ENCODE measurements at regions of chr16 and their contacts with region 1.

Region 1: GRCh38 chr16:71933913-71934695 is 38.8 kb downstream of the IST1 start:
- DNase-seq: no peak
- ATAC-seq: peak in 5 of 8 donors; percentile 9 to 36 (median 19)
- H3K4me3 ChIP-seq: no peak overlapping the region
- H3K27ac ChIP-seq: peak overlapping the region in 2 of 10 donors; percentile 23 to 24
- H3K4me1 ChIP-seq: peaks cover 0 to 47% (median 30%) of the 10 kb centered on the region in 9 donors
- H3K27me3 ChIP-seq: no peaks in the 10 kb centered on the region
- CTCF ChIP-seq: no peak

Region 2: DNA sequence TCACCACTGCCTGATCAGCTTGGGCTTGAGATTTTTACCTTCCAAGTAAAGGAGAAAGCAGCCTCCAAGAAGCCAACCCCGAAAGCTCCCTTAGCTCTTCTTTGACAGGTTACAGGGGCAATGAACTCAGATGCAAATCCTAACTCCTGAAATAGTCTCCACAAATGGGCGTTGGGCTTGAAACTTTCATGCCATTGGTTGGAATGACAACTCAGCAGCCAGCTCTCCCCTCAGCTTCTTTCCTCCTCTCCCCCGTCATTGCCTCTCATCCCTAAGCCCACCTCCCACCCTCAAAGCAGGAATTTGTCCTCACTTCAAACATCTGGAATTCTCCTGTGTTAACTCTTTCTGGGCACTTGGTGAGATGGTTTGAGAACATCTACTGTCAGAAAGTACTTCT is 357.1 kb before region 1 on chr16 and contains the start of gene TAT:
- intact Hi-C with region 1: no loop called
- DNase-seq: no peak
- ATAC-seq: no peak
- H3K4me3 ChIP-seq: no peak within 1 kb of the TSS
- H3K27ac ChIP-seq: no peak within 1 kb of the TSS
- H3K4me1 ChIP-seq: no peaks in the 10 kb centered on the region
- H3K27me3 ChIP-seq: peaks cover 0 to 28% (median 16%) of the 10 kb centered on the region in 7 donors
- CTCF ChIP-seq: no peak
- total RNA-seq, gene TAT: not detected

Region 3: GRCh38 chr16:71845639-71846430 is 88.3 kb before region 1 on chr16 and contains the start of gene ATXN1L:
- intact Hi-C with region 1: no loop called
- DNase-seq: peak; percentile 89 to 92
- ATAC-seq: peak; percentile 97 to 98 (median 98)
- H3K4me3 ChIP-seq: peak within 1 kb of the TSS; percentile 83 to 100 (median 99)
- H3K27ac ChIP-seq: peak within 1 kb of the TSS; percentile 64 to 97 (median 91)
- H3K4me1 ChIP-seq: peaks cover 0 to 33% (median 22%) of the 10 kb centered on the region in 9 donors
- H3K27me3 ChIP-seq: no peaks in the 10 kb centered on the region
- CTCF ChIP-seq: peak in 2 of 9 donors; percentile 6 to 26
- total RNA-seq, gene ATXN1L: 13.9 to 24.2 (median 19.1) TPM

Region 4: DNA sequence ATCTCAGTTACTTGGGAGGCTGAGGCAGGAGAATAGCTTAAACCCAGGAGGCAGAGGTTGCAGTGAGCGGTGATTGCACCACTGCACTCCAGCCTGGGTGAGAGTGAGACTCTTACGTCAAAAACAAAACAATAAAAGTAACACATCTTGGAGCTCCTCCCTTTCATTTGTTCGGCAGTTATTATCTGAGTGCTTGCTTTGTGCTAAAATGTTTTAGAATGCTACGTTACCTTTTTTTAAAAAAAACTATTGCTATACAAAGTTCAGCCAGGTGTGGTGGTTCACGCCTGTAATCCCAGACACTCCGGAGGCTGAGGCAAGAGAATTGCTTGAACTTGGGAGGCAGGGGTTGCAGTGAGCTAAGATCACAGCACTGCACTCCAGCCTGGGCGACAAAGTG is 23.0 kb before region 1 on chr16:
- intact Hi-C with region 1: loop called in 1 of 10 experiments (anchors 2 kb)
- DNase-seq: no peak
- ATAC-seq: no peak
- H3K4me3 ChIP-seq: no peak overlapping the region
- H3K27ac ChIP-seq: no peak overlapping the region
- H3K4me1 ChIP-seq: peaks cover 9 to 92% (median 54%) of the 10 kb centered on the region in 9 donors
- H3K27me3 ChIP-seq: no peaks in the 10 kb centered on the region
- CTCF ChIP-seq: no peak

Region 5: GRCh38 chr16:72093448-72094265 is 159.6 kb after region 1 on chr16 and contains the starts of genes DHX38 and TXNL4B:
- intact Hi-C with region 1: no loop called
- DNase-seq: peak; percentile 87 to 97
- ATAC-seq: peak; percentile 99 to 100 (median 99)
- H3K4me3 ChIP-seq: peak within 1 kb of the TSS; percentile 82 to 99 (median 90)
- H3K27ac ChIP-seq: peak within 1 kb of the TSS; percentile 74 to 95 (median 92)
- H3K4me1 ChIP-seq: peaks cover 0 to 46% (median 33%) of the 10 kb centered on the region in 9 donors
- H3K27me3 ChIP-seq: no peaks in the 10 kb centered on the region
- CTCF ChIP-seq: no peak
- total RNA-seq, gene DHX38: 29.1 to 46.5 (median 36.6) TPM
- total RNA-seq, gene TXNL4B: 3.2 to 11.7 (median 5.9) TPM